ENCODE measurements at regions of chr13 and their contacts with region 1.

Region 1: DNA sequence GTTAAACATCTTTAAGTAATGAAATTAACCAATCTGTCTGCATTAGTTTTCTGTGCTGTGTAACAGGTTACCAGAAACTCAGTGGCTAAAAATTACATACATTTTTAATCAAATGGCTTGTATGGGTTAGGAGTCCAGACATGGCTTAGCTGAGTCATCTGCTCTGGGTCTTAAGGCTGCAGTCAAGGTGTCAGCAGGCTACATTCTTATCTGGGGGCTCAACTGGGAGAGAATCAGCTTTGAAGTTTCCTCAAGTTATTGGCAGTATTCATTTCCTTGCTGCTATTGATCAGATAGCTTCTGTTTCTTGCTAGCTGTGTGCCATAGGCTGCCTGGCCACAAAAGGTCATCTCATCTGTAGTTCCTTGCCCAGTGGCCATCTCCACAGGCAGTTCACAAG is 1163.0 kb downstream of the DIAPH3 start:
- DNase-seq: no peak

Region 2: GRCh38 chr13:58933475-58933874 is 67.3 kb before region 1 on chr13:
- in situ Hi-C with region 1: no loop called
- DNase-seq: no peak

Region 3: GRCh38 chr13:58960888-58961287 is 39.9 kb before region 1 on chr13:
- in situ Hi-C with region 1: loop called (anchors 5 kb)
- DNase-seq: no peak

Region 4: DNA sequence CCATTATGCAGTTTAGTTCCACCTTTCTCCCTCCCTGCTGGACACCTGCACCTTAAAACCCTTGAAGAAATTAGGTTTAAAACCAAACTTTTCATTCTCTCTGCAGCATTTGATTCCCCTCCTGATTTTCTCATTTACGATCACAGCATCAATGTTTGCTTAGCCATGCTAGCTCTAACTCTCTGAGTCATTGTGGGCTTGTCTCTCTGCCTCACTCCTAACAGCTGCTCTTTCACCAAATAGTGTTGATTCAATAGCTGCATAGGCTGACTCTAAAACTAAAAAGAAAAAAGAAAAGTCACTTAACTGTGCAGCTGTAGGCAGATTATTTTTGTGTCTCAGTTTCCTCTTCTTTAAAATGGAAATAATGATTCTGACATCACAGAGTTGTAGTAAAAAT is 38.1 kb after region 1 on chr13:
- in situ Hi-C with region 1: no loop called
- DNase-seq: no peak

Region 5: GRCh38 chr13:59061621-59062020 is 60.9 kb after region 1 on chr13:
- in situ Hi-C with region 1: no loop called
- DNase-seq: peak; percentile 47

Measured in G401 (cell line).